ENCODE measurements at regions of chr3 and their contacts with region 1.

Region 1: DNA sequence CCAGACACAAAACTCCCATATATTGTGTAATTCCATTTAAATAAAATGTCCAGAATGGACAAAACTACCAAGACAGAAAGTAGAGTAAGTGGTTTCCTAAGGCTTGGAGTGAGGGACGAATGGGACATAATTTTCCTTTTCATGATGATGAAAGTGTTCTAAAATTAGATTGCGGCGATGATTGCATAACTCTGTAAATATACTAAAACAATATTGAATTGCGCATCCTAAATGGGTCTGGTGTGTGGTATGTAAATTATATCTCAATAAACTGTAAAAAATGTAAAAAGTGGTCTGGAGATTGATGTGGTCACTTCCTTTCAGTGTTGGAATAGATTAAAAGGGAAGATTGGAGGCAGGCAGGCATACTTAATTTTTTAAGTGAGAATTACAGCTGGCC is 105.9 kb upstream of the KCNAB1 start:
- DNase-seq: no peak
- H3K4me3 Mint-ChIP-seq: no peak overlapping the region
- H3K27ac Mint-ChIP-seq: no peak overlapping the region
- H3K4me1 Mint-ChIP-seq: no peaks in the 10 kb centered on the region
- H3K27me3 Mint-ChIP-seq: no peaks in the 10 kb centered on the region
- CTCF ChIP-seq: no peak

Region 2: DNA sequence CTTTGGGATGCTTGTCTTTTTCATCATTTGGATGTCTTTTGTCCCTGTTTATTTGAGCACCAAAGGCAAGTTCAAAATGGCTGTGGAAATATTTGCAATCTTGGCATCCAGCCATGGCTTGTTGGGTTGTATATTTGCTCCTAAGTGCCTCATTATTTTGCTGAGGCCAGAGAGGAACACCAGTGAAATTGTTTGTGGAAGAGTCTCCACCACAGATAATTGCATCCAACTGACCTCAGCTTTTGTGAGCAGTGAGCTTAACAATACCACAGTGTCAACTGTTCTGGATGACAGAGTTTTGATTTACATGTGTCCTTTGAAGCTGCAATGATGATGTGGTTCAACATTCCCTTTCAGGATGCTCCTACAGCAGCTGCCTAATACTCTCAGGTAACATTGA is 22.9 kb after region 1 on chr3:
- CTCF ChIA-PET with region 1: no interaction called
- intact Hi-C with region 1: no loop called
- DNase-seq: no peak
- H3K4me3 Mint-ChIP-seq: no peak overlapping the region
- H3K27ac Mint-ChIP-seq: no peak overlapping the region
- H3K4me1 Mint-ChIP-seq: no peaks in the 10 kb centered on the region
- H3K27me3 Mint-ChIP-seq: peaks cover 19% of the 10 kb centered on the region
- CTCF ChIP-seq: no peak

Region 3: DNA sequence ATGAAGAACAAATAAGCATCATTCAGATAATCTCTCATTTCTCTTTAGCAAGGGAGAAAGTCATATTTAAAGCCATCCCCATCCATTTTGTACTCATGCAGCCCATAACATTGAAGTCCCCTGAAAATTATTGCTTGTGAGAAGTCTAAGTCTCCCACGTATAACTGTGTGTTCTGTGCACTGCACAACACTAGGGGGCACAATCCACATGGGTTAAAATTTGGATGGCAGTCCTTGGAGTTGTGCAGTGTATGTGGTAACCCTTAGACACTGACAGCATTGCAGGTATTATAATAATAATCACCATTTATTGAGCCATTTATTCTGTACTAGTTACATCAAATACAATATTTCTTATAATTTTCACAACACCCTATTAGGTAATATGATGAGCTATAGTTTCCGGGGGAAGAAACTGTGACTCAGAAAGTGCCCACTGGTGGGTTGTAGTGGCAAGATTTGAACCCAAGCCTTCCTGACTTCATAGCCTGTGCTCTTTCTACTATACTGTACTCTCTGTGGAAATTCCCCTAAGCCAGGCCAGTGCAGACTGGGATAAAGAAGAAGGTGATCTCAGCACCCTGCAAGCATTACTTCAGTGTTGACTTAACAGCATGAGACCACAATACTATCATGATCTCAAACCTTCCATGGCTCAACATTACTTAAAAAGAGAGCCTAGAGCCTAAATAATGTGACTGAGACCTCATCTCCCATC is 121.6 kb after region 1 on chr3:
- CTCF ChIA-PET with region 1: no interaction called
- intact Hi-C with region 1: loop called (anchors 5 kb)
- DNase-seq: peak; percentile 19
- H3K4me3 Mint-ChIP-seq: no peak overlapping the region
- H3K27ac Mint-ChIP-seq: no peak overlapping the region
- H3K4me1 Mint-ChIP-seq: no peaks in the 10 kb centered on the region
- H3K27me3 Mint-ChIP-seq: peaks cover 42% of the 10 kb centered on the region
- CTCF ChIP-seq: peak; percentile 33